ENCODE measurements at regions of chr5 and their contacts with region 1.

Region 1: DNA sequence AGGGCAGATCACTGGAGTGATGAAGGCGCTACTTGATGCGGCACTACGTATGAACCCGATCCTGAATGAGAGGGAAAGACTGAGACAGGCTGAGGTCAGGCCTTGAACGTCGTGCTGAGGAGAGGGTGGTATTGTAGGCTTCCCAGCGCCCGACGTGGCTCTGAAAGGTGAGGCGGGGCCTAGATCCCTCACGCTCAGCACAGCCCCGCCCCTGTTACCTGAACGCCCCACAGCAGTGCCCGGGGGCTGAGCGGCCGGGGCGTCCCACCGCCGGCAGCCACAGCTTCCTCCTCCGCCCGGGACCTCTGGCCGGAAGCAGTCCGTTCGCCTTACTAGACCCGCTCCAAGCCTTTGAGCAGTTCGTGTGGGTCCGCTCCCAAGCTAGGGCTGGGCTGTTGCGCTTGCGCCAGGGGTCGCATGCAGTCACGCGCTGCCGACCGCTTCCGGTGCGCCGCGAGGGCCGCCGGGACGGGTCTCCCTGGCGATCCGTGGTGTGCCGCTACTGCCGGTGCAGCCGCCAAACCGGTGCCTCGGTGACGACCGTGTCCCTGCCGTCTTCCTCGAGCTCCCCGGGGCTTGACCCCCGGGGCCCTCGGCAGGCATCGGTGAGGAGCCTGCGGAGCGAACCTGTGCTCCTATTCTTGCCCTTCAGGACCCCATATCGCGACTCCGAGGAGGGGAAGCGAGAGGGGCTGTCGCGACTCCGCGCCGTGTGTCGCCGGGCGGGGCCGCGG is at the starts of genes HMGXB3 and TIGD6:
- DNase-seq: peak; percentile 67 to 92 (median 83)
- ATAC-seq: peak; percentile 84
- H3K4me3 ChIP-seq: peak within 1 kb of the TSS; percentile 73 to 79
- H3K4me3 Mint-ChIP-seq: peak within 1 kb of the TSS; percentile 89
- H3K27ac ChIP-seq: peak within 1 kb of the TSS; percentile 75 to 80
- H3K27ac Mint-ChIP-seq: peak within 1 kb of the TSS; percentile 91
- H3K4me1 ChIP-seq: peaks cover 22% of the 10 kb centered on the region
- H3K4me1 Mint-ChIP-seq: peaks cover 39% of the 10 kb centered on the region
- H3K27me3 ChIP-seq: no peaks in the 10 kb centered on the region
- H3K27me3 Mint-ChIP-seq: no peaks in the 10 kb centered on the region
- CTCF ChIP-seq: no peak
- total RNA-seq, gene HMGXB3: 27.4 to 29.7 TPM
- total RNA-seq, gene TIGD6: 0.97 to 1.5 TPM

Region 2: GRCh38 chr5:149345147-149345875 is 655.1 kb before region 1 on chr5 and contains the start of gene GRPEL2:
- CTCF ChIA-PET with region 1: no interaction called
- POLR2A ChIA-PET with region 1: no interaction called
- intact Hi-C with region 1: loop called in 1 of 2 experiments (anchors 10 kb)
- DNase-seq: peak; percentile 65 to 93 (median 84)
- ATAC-seq: peak; percentile 65
- H3K4me3 ChIP-seq: peak within 1 kb of the TSS; percentile 94 to 95
- H3K4me3 Mint-ChIP-seq: peak within 1 kb of the TSS; percentile 92
- H3K27ac ChIP-seq: peak within 1 kb of the TSS; percentile 63 to 88
- H3K27ac Mint-ChIP-seq: peak within 1 kb of the TSS; percentile 90
- H3K4me1 ChIP-seq: peaks cover 53% of the 10 kb centered on the region
- H3K4me1 Mint-ChIP-seq: peaks cover 60% of the 10 kb centered on the region
- H3K27me3 ChIP-seq: no peaks in the 10 kb centered on the region
- H3K27me3 Mint-ChIP-seq: no peaks in the 10 kb centered on the region
- CTCF ChIP-seq: no peak
- total RNA-seq, gene GRPEL2: 9.1 to 9.7 TPM

Region 3: DNA sequence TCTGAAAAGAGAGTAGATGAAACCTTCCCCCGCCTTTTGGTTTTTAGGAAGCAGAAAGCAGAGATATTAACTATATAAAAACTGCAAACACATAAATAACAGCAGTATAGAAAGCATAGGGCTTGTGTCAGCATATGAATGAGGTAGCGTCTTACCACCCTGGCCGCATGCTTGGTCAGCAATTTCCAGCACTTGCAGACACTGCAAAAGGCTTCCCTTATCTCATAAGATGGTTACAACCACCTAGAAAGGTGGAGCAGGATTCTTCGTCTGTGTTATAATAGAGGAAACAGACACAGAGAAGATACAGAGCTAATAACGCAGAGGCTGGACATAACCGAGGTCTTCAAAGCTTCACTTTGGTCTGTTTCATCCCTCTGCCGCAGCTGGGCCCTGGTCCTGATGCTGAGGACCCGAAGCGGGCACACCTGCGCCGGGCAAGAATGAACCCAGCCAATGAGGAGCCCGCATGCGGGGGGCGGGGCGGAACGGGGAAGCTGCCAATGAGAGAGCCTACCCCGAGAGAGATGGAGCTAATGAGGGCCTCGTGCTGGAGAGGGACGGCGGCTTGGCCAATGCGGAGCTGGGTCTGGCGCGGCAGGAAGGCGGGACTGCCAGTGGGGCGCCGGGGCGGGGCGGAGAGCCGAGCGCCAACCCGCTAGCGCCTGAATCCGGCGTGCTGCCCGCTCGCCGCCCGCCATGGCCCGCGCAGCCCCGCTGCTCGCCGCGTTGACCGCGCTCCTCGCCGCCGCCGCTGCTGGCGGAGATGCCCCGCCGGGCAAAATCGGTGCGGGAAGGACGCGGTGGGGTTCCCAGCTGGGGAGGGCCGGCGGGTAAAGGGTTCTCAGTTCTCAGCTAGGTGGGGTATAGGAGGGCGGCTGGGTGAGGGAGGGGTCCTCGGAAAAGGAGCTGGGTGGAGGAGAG is 642.8 kb before region 1 on chr5 and contains the start of gene PCYOX1L:
- CTCF ChIA-PET with region 1: no interaction called
- POLR2A ChIA-PET with region 1: no interaction called
- intact Hi-C with region 1: loop called in 1 of 2 experiments (anchors 2 kb)
- DNase-seq: peak; percentile 89 to 99 (median 95)
- ATAC-seq: peak; percentile 96
- H3K4me3 ChIP-seq: peak within 1 kb of the TSS; percentile 83 to 88
- H3K4me3 Mint-ChIP-seq: peak within 1 kb of the TSS; percentile 93
- H3K27ac ChIP-seq: peak within 1 kb of the TSS; percentile 63 to 74
- H3K27ac Mint-ChIP-seq: peak within 1 kb of the TSS; percentile 92
- H3K4me1 ChIP-seq: peaks cover 37% of the 10 kb centered on the region
- H3K4me1 Mint-ChIP-seq: peaks cover 67% of the 10 kb centered on the region
- H3K27me3 ChIP-seq: no peaks in the 10 kb centered on the region
- H3K27me3 Mint-ChIP-seq: no peaks in the 10 kb centered on the region
- CTCF ChIP-seq: no peak
- total RNA-seq, gene PCYOX1L: 18.9 to 21.9 TPM

Region 4: DNA sequence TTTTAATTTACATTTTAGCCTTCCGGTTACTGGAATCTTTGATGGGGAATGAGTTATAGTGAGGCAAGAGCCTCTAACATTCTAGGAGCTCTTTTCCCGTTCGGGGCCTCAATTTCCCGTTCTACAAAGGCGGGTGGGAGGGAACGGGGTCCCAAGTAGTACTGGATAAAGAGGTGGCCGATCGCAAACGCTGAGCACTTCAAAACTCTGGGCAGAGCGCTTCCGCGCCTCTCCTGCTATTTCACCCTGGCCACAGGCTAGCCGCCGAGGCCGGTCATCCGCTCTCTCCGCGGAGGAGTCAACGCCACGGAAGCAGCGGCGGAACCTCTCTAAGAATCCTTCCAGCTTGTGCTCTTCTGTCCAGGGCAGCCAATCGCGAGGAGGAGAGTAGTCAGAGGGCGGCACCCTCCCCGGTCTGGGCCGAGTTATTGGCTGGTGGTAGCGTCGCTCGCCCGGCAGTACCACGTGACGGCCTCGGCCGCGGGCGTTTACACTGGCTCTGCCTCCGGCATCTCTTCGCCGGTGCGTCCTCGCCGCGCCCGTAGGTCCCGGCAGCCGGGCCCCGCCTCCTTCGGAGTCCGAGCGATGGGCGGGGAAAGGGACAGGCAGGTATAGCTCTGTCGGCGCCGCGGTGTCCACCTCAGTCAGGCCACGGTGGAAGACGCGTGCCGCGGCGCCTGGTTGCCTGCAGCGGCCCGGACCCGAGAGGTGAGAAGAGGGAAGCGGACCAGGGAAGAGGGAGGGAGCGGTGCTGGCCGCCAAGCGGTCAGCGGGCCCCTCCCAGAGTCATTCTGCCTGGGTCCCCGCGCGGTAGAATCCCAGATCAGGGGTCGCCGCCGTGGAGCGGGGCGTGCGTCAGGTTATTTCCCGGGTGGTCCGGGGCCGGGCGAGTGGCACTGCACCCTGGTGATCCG is 39.9 kb before region 1 on chr5 and contains the start of gene SLC26A2:
- CTCF ChIA-PET with region 1: interaction called, 4 read pairs
- POLR2A ChIA-PET with region 1: interaction called, 6 read pairs
- intact Hi-C with region 1: loop called (anchors 1 to 2 kb)
- DNase-seq: peak; percentile 83 to 97 (median 93)
- ATAC-seq: peak; percentile 95
- H3K4me3 ChIP-seq: peak within 1 kb of the TSS; percentile 85 to 99
- H3K4me3 Mint-ChIP-seq: peak within 1 kb of the TSS; percentile 97
- H3K27ac ChIP-seq: peak within 1 kb of the TSS; percentile 66 to 77
- H3K27ac Mint-ChIP-seq: peak within 1 kb of the TSS; percentile 97
- H3K4me1 ChIP-seq: peaks cover 26% of the 10 kb centered on the region
- H3K4me1 Mint-ChIP-seq: peaks cover 39% of the 10 kb centered on the region
- H3K27me3 ChIP-seq: no peaks in the 10 kb centered on the region
- H3K27me3 Mint-ChIP-seq: no peaks in the 10 kb centered on the region
- CTCF ChIP-seq: no peak
- total RNA-seq, gene SLC26A2: 2.0 to 2.2 TPM